ENCODE measurements at regions of chr16 and their contacts with region 1.

Region 1: GRCh38 chr16:83356266-83356665 is 451.5 kb upstream of the HSBP1 start:
- DNase-seq: no peak
- H3K4me3 ChIP-seq: no peak overlapping the region
- H3K27ac ChIP-seq: no peak overlapping the region
- H3K4me1 ChIP-seq: no peaks in the 10 kb centered on the region
- H3K27me3 ChIP-seq: no peaks in the 10 kb centered on the region
- CTCF ChIP-seq: peak; percentile 5 to 85 (median 69)
- EP300 ChIP-seq: no peak
- POLR2A ChIP-seq: no peak
- RAD21 ChIP-seq: peak; percentile 68 to 81

Region 2: DNA sequence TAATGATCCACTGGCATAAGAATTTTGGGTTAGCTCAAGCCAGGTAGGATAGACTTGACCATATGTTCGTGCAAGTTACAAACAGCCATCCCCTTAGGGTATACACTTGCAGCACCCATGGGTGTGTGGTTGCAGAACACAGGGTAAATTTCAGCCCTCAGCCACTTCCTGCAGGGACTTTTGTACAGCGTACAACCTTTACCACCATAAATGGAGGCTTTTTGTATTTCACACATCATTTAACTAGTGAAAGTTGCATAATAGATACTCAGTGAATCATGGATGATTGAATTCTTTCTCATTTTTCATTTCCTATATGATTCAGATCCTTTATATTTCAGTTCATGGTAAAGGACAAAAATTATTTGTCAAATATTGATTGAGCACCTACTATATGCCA is 255.6 kb before region 1 on chr16:
- CTCF ChIA-PET with region 1: no interaction called
- POLR2A ChIA-PET with region 1: no interaction called
- DNase-seq: no peak
- H3K4me3 ChIP-seq: no peak overlapping the region
- H3K27ac ChIP-seq: no peak overlapping the region
- H3K4me1 ChIP-seq: no peaks in the 10 kb centered on the region
- H3K27me3 ChIP-seq: no peaks in the 10 kb centered on the region
- CTCF ChIP-seq: no peak
- EP300 ChIP-seq: no peak
- POLR2A ChIP-seq: no peak
- RAD21 ChIP-seq: no peak

Region 3: DNA sequence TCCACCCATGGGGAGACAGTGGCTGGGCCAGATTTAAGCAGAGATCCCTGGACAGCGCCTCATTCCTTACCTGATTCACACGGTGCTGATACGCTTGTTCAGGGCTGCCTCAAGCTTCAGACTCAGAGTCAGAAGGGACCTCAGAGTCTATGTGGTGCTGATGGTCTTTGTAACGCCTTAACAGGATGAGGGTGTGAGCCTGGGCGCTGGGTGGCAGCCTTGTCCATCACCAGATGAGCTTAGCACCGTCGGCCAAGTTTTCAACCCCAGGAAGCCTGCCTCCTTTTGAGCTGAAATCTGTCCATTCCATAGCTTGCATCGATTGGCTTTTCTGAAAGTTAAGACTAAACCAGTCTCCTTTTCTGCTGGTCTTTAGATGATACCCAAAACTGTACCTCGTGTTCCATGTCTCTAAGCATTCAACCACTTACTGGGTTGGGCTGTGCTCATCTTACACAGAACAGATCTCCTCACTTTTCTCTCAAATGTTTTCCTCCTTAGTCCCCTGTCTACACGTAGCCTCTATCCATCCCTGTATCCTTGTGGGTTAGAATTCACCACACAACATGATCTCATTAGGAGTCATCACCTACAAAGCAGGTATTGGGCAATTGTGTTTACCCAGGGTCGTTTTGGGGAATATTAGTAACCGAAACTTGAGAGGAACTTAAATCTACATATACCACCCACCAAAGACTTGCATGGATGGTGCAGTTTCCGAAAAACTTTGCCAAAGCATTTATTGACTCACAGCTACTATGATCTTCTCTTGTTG is 156.1 kb before region 1 on chr16:
- CTCF ChIA-PET with region 1: interaction called, 12 read pairs
- POLR2A ChIA-PET with region 1: no interaction called
- DNase-seq: no peak
- H3K4me3 ChIP-seq: no peak overlapping the region
- H3K27ac ChIP-seq: no peak overlapping the region
- H3K4me1 ChIP-seq: no peaks in the 10 kb centered on the region
- H3K27me3 ChIP-seq: no peaks in the 10 kb centered on the region
- CTCF ChIP-seq: peak in 2 of 3 experiments; percentile 11 to 28; a peak in 1 of 4 replicates
- EP300 ChIP-seq: no peak
- POLR2A ChIP-seq: no peak
- RAD21 ChIP-seq: peak; percentile 34 to 53; a peak in 3 of 4 replicates

Region 4: DNA sequence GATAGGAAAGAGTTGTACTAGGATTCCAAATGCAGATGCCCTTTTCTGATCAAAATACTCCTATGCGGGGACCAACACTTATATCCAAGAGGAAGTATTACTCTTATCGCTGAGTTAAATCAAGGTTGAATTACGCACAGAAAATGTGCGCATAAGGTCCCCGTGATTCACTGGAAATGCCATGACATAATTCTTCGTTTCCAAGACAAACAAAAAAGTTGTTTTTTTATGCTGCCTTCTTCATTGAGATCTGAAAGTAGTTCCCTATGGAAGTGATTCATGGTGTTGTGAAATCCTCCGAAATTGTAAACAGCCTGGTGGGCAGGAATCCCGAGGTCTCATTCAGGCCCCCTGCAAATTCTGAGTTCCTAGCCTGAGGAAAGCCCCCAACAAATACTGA is 12.3 kb before region 1 on chr16:
- CTCF ChIA-PET with region 1: interaction called, 17 read pairs
- POLR2A ChIA-PET with region 1: no interaction called
- DNase-seq: no peak
- H3K4me3 ChIP-seq: no peak overlapping the region
- H3K27ac ChIP-seq: no peak overlapping the region
- H3K4me1 ChIP-seq: peaks cover 0 to 3% (median 1%) of the 10 kb centered on the region in 4 experiments; a peak in 2 of 7 replicates
- H3K27me3 ChIP-seq: no peaks in the 10 kb centered on the region
- CTCF ChIP-seq: no peak
- EP300 ChIP-seq: no peak
- POLR2A ChIP-seq: no peak
- RAD21 ChIP-seq: no peak

Region 5: DNA sequence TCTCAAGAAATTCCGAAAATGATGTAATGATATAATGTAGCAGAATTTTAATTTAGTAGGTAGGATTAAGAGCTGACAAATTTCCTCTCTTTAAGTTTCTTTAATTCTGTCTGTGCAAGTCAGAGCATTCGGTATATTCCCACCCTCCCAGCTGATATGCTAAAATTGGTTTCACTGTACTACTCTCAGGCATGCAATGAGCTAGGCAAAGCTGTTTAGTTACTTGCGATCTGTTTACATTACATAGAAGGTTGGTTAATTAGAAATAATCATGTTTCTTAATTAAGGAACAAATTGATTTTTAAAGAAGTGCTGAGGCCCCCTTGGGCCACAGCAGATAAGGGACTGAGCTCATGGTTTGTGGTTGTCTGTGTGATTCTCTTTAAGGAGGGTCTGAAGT is 18.7 kb after region 1 on chr16:
- CTCF ChIA-PET with region 1: interaction called, 24 read pairs
- POLR2A ChIA-PET with region 1: no interaction called
- DNase-seq: no peak
- H3K4me3 ChIP-seq: no peak overlapping the region
- H3K27ac ChIP-seq: no peak overlapping the region
- H3K4me1 ChIP-seq: no peaks in the 10 kb centered on the region
- H3K27me3 ChIP-seq: no peaks in the 10 kb centered on the region
- CTCF ChIP-seq: no peak
- EP300 ChIP-seq: no peak
- POLR2A ChIP-seq: no peak
- RAD21 ChIP-seq: no peak